MCF 10A (cell line): ENCODE measurements at regions of chr12 and their contacts with region 1.

Region 1: DNA sequence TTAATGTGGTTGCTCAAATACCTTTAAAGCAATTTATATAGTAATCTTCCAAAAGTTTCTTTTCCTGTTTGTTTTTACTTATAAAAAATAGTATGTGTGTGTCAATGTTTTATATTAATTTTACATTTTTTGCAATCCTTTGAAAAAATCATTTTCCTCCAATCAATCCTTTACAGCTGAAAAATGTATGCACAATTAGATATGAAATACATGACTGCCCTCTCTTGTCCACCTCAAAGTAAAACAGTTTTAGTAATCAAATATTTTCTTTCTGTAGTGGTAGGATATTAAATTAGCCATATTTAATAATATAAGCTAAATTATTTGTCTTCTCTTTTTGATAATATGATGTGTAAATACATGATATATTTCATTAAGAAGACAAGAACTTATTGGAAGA is 269.9 kb downstream of the ADAMTS20 start:
- DNase-seq: peak; percentile 28
- H3K4me3 Mint-ChIP-seq: no peak overlapping the region
- H3K27ac Mint-ChIP-seq: no peak overlapping the region
- H3K4me1 Mint-ChIP-seq: peaks cover 24% of the 10 kb centered on the region
- H3K27me3 Mint-ChIP-seq: no peaks in the 10 kb centered on the region
- CTCF ChIP-seq: peak; percentile 62

Region 2: DNA sequence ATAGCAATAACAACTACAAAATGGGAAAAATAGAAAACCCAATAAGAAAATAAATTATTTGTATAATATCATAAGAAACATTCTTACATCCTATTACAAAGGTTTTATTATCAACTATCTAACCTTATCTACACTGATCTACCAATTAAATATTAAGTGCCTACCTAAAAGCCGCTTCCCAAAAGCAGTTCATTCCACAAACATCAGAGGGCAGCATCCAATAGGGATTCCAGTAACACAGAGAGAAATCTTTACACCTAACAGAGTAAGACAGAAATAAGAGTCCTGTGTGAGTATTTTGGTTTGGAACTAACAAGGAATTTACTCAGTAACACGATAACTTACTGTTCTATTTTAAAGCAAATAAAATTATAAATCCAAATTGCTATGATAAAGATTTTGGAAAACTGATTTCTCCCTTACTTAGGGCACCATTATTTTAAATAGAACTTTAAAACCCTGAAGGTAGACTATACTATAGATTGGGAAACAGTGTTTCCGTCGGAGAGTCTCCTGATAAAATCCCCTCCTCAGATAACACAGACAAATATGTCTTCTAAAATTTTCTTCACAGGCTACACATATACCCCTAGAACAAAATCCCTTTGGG is 1152.4 kb before region 1 on chr12:
- CTCF ChIA-PET with region 1: interaction called, 5 read pairs
- POLR2A ChIA-PET with region 1: no interaction called
- intact Hi-C with region 1: loop called (anchors 5 kb)
- DNase-seq: peak; percentile 81
- H3K4me3 Mint-ChIP-seq: peak overlapping the region; percentile 66
- H3K27ac Mint-ChIP-seq: peak overlapping the region; percentile 74
- H3K4me1 Mint-ChIP-seq: peaks cover 26% of the 10 kb centered on the region
- H3K27me3 Mint-ChIP-seq: no peaks in the 10 kb centered on the region
- CTCF ChIP-seq: peak; percentile 73

Region 3: GRCh38 chr12:42490261-42490842 is 791.8 kb before region 1 on chr12:
- CTCF ChIA-PET with region 1: interaction called, 15 read pairs
- POLR2A ChIA-PET with region 1: interaction called, 3 read pairs
- intact Hi-C with region 1: no loop called
- DNase-seq: no peak
- H3K4me3 Mint-ChIP-seq: no peak overlapping the region
- H3K27ac Mint-ChIP-seq: no peak overlapping the region
- H3K4me1 Mint-ChIP-seq: no peaks in the 10 kb centered on the region
- H3K27me3 Mint-ChIP-seq: no peaks in the 10 kb centered on the region
- CTCF ChIP-seq: no peak

Region 4: DNA sequence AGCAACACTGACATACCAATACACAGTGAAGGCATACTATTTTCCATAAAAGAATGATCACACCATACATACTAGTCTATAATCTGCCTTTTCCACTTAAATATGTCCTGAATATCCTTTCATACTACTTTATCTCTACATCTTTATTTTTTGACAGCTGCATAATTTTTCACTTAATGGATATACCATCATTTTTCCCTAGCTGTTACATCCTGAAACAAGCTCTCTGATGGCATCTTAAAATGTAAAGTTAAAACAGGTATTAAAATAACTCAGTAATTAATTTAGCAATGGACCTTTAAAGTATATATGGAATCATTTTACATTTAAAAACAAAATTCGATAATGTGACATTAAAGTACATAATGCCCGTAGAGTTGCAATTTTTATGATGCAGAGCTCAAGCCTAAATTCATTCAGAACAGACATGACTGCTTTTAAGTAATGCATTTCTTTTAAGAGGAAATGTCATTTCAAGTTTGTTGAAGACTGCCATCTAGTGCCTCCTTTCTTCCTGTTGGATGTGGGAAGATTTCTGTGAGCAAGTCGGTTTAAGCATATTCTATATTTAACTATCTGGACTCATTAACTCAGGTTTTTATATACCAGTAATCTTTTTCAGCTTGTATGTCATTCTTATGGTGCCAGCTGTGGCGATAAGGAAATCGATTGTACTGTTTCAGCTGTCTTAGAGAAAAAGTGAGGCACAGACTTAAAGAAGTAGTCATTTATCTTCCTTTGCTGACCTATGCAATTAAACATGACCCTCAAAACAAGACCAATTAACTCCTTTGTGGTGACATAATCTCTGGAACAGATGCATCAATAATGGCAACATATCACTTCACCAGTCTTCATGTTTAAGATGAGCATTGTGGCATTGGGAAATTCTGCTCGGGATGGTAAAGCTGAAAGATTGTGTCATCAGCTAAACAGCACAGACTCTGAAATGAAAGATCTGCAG is 712.9 kb before region 1 on chr12:
- CTCF ChIA-PET with region 1: interaction called, 12 read pairs
- POLR2A ChIA-PET with region 1: no interaction called
- intact Hi-C with region 1: no loop called
- DNase-seq: peak; percentile 58
- H3K4me3 Mint-ChIP-seq: no peak overlapping the region
- H3K27ac Mint-ChIP-seq: no peak overlapping the region
- H3K4me1 Mint-ChIP-seq: peaks cover 6% of the 10 kb centered on the region
- H3K27me3 Mint-ChIP-seq: no peaks in the 10 kb centered on the region
- CTCF ChIP-seq: peak; percentile 57

Region 5: GRCh38 chr12:42589465-42590329 is 692.4 kb before region 1 on chr12 and contains the start of gene PRICKLE1:
- CTCF ChIA-PET with region 1: interaction called, 53 read pairs
- POLR2A ChIA-PET with region 1: interaction called, 3 read pairs
- intact Hi-C with region 1: loop called (anchors 1 kb)
- DNase-seq: peak; percentile 54
- H3K4me3 Mint-ChIP-seq: peak within 1 kb of the TSS; percentile 81
- H3K27ac Mint-ChIP-seq: peak within 1 kb of the TSS; percentile 76
- H3K4me1 Mint-ChIP-seq: peaks cover 30% of the 10 kb centered on the region
- H3K27me3 Mint-ChIP-seq: no peaks in the 10 kb centered on the region
- CTCF ChIP-seq: no peak
- total RNA-seq, gene PRICKLE1: 7.9 and 14.1 TPM in 2 replicates

Region 6: DNA sequence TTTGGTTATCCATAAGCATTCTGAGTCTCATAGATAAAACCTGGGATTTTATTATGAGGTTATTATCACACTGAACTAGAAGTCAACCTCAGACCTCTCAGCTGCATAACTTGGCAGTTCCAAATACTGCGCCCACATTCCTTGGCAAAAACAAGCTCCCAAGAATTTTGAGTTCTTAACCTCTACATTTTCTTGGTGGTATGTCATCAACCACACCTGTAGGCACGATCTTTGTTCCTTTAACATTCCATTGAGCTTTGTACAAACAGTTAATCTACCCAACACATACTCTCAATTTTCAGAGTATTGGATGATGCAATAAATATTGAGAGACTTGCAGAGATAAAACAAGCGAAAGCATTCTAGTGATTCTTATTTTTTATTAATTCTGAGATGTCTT is 320.7 kb before region 1 on chr12:
- CTCF ChIA-PET with region 1: interaction called, 3 read pairs
- POLR2A ChIA-PET with region 1: no interaction called
- intact Hi-C with region 1: loop called (anchors 5 kb)
- DNase-seq: peak; percentile 91
- H3K4me3 Mint-ChIP-seq: no peak overlapping the region
- H3K27ac Mint-ChIP-seq: peak overlapping the region; percentile 71
- H3K4me1 Mint-ChIP-seq: peaks cover 50% of the 10 kb centered on the region
- H3K27me3 Mint-ChIP-seq: no peaks in the 10 kb centered on the region
- CTCF ChIP-seq: no peak

Region 7: GRCh38 chr12:43338848-43339526 is 56.9 kb after region 1 on chr12:
- CTCF ChIA-PET with region 1: interaction called, 5 read pairs
- POLR2A ChIA-PET with region 1: interaction called, 6 read pairs
- intact Hi-C with region 1: loop called (anchors 1 kb)
- DNase-seq: peak; percentile 64
- H3K4me3 Mint-ChIP-seq: no peak overlapping the region
- H3K27ac Mint-ChIP-seq: no peak overlapping the region
- H3K4me1 Mint-ChIP-seq: peaks cover 12% of the 10 kb centered on the region
- H3K27me3 Mint-ChIP-seq: no peaks in the 10 kb centered on the region
- CTCF ChIP-seq: peak; percentile 55